ENCODE measurements at regions of chr10 and their contacts with region 1.

Region 1: DNA sequence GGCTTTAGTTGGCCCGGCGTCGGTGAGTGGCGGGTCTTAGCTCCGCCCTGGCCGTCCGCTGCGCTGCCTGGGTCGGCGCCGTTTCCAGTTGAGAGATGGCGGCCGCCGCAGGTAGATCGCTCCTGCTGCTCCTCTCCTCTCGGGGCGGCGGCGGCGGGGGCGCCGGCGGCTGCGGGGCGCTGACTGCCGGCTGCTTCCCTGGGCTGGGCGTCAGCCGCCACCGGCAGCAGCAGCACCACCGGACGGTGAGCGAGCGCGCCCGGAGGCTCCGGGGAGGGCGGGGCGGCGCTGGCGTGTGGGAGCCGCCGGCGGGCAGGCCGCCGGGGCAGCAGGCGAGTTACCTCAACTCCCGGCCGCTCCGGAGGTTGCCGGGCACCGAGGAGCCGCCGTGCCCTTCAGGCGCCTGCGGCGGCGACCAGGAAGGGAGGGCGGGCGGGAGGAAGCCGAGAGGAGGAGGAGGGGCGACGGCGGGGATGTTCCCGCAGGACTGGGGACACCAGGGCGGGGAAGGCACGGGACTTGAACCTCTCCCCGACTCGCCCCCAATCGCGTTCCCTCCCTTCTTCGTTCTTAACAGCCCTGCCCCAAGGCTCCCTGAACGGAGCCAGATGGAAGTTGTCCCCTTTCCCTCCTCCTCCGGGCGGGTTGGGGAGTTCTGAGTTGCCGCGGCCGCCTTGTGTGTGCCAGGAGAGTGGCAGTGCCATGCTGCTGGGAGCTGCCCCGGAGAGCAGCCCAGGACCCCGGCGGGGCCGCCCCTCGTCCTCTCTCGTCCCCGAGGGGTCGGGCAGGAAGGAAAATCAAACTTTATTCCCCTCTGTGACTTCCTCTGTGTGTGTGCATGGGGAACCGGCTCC is at the start of gene MCU:
- DNase-seq: peak; percentile 95
- H3K4me3 Mint-ChIP-seq: peak within 1 kb of the TSS; percentile 82
- H3K27ac Mint-ChIP-seq: peak within 1 kb of the TSS; percentile 48
- H3K4me1 Mint-ChIP-seq: peaks cover 35% of the 10 kb centered on the region
- H3K27me3 Mint-ChIP-seq: no peaks in the 10 kb centered on the region
- total RNA-seq, gene MCU: 17.7 to 19.3 TPM

Region 2: DNA sequence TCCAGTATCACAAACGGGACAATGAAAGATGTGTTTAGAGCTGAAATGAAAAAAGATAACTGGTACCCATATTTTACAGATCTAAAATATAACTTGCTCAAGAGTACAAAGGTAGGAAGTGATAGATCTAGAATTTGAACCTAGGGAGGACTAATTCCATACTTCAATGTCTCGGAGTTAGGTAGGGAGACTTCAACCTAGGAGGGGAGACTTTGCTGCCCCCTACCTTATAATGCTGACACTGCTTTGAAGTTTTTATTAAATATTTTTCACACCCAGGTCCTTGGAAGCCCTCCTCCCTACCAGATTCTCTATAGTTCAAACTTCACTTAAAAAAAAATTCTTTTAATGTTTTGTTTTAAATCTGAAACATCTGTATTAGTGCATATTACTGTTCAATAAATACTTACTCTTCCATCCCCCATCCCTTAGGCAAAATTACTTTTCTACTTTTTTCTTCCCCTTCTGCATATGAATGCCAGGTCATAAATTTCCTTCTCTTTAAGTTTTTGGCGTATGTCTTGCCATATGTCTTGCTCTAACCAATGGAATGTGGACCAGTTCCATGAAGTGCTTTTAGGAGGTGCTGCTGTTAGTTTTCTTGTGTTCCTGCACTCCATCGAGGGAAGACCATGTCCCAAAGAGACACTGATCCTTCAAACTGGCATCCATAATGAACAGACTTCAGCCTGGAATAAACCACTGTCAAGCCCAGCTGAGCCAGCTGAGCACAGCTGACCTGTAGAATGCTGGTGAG is 124.2 kb before region 1 on chr10:
- CTCF ChIA-PET with region 1: no interaction called
- POLR2A ChIA-PET with region 1: interaction called, 4 read pairs
- intact Hi-C with region 1: loop called (anchors 1 kb)
- DNase-seq: no peak
- H3K4me3 Mint-ChIP-seq: no peak overlapping the region
- H3K27ac Mint-ChIP-seq: no peak overlapping the region
- H3K4me1 Mint-ChIP-seq: peaks cover 16% of the 10 kb centered on the region
- H3K27me3 Mint-ChIP-seq: no peaks in the 10 kb centered on the region

Region 3: DNA sequence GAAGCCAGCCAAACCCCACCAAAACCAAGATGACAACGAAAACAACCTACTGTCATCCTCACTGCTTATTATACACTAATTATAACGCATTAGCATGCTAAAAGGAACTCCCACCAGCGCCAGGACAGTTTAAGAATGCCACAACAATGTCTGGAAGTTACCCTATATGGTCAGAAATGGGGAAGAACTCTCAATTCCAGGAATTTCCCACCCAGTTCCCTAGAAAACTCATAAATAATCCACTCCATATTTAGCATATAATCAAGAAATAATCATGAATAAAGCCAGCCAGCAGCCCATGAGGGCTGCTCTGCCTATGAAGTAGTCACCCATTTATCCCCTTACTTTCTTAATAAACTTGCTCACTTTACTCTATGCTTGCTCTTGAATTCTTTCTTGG is 87.2 kb before region 1 on chr10:
- CTCF ChIA-PET with region 1: no interaction called
- POLR2A ChIA-PET with region 1: no interaction called
- intact Hi-C with region 1: no loop called
- DNase-seq: no peak
- H3K4me3 Mint-ChIP-seq: no peak overlapping the region
- H3K27ac Mint-ChIP-seq: no peak overlapping the region
- H3K4me1 Mint-ChIP-seq: no peaks in the 10 kb centered on the region
- H3K27me3 Mint-ChIP-seq: no peaks in the 10 kb centered on the region

Region 4: GRCh38 chr10:72802763-72803505 is 110.7 kb after region 1 on chr10:
- CTCF ChIA-PET with region 1: interaction called, 3 read pairs
- POLR2A ChIA-PET with region 1: no interaction called
- intact Hi-C with region 1: loop called (anchors 10 kb)
- DNase-seq: no peak
- H3K4me3 Mint-ChIP-seq: no peak overlapping the region
- H3K27ac Mint-ChIP-seq: no peak overlapping the region
- H3K4me1 Mint-ChIP-seq: peaks cover 21% of the 10 kb centered on the region
- H3K27me3 Mint-ChIP-seq: no peaks in the 10 kb centered on the region

Region 5: DNA sequence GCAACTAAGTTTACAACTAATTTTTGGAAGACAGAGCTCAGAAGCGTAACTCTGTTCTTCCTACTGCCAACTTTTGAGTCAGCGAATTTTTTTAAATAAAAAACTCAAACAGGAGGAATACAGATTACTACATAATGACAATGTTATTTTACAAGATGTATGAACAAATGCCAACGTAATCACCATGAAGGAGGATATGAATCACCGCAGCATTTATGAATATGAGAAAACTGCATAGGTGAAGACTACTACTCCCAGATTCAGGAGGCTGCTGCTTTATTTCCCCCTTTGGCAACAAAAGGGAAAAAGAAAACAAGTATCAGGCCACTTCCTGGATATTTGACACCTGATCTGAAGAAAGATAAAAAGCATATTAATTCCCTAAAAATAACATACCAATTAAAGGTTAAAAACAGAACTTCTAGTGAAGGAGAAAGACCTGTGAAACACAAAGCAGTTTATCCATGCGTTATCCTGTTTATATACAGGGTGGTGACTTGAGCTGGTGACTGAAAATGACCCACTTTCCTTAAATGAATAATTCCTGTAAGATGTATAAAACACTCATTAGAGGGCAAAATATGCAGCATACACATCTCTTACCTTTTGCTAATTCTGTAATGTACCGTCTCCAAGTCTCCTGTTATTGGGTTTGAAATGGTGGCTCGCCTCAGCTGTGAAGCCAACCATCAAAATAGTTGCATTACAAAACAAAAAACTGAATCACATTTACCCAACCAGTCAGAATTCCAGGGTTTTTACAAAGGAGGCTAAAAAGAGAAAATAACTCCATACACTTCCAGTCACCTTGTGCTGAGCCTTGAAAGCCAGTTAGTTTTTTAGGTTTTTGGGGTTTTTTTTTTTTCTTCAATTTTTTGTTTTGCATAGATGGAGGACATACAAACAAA is 352.3 kb after region 1 on chr10:
- CTCF ChIA-PET with region 1: no interaction called
- POLR2A ChIA-PET with region 1: no interaction called
- intact Hi-C with region 1: no loop called
- DNase-seq: no peak
- H3K4me3 Mint-ChIP-seq: no peak overlapping the region
- H3K27ac Mint-ChIP-seq: no peak overlapping the region
- H3K4me1 Mint-ChIP-seq: peaks cover 5% of the 10 kb centered on the region
- H3K27me3 Mint-ChIP-seq: no peaks in the 10 kb centered on the region

Region 6: GRCh38 chr10:73060738-73061635 is 368.7 kb after region 1 on chr10:
- CTCF ChIA-PET with region 1: no interaction called
- POLR2A ChIA-PET with region 1: no interaction called
- intact Hi-C with region 1: loop called (anchors 5 kb)
- DNase-seq: no peak
- H3K4me3 Mint-ChIP-seq: no peak overlapping the region
- H3K27ac Mint-ChIP-seq: no peak overlapping the region
- H3K4me1 Mint-ChIP-seq: peaks cover 10% of the 10 kb centered on the region
- H3K27me3 Mint-ChIP-seq: no peaks in the 10 kb centered on the region

Measured in activated CD4-positive, alpha-beta memory T cell treated with anti-CD3 and anti-CD28 coated beads for 36 hours (primary cell).